ENCODE measurements at regions of chr19 and their contacts with region 1.

Region 1: GRCh38 chr19:21767065-21767800 is at the start of gene ZNF100:
- DNase-seq: peak; percentile 82 to 91 (median 84)
- H3K4me3 ChIP-seq: peak within 1 kb of the TSS; percentile 79 to 84
- H3K4me3 Mint-ChIP-seq: peak within 1 kb of the TSS; percentile 96 to 99 (median 97)
- H3K27ac ChIP-seq: peak within 1 kb of the TSS; percentile 62
- H3K27ac Mint-ChIP-seq: peak within 1 kb of the TSS; percentile 73 to 98 (median 96)
- H3K4me1 ChIP-seq: peaks cover 12% of the 10 kb centered on the region
- H3K4me1 Mint-ChIP-seq: peaks cover 13 to 36% (median 21%) of the 10 kb centered on the region in 4 donors
- H3K27me3 ChIP-seq: no peaks in the 10 kb centered on the region
- H3K27me3 Mint-ChIP-seq: no peaks in the 10 kb centered on the region
- total RNA-seq, gene ZNF100: 15.9 to 16.0 TPM

Region 2: GRCh38 chr19:21835810-21836444 is 68.7 kb after region 1 on chr19 and contains the start of gene ZNF43:
- CTCF ChIA-PET with region 1: interaction called, 11 read pairs
- POLR2A ChIA-PET with region 1: interaction called, 34 read pairs
- intact Hi-C with region 1: loop called (anchors 5 kb)
- DNase-seq: peak; percentile 92 to 95 (median 92)
- H3K4me3 ChIP-seq: peak within 1 kb of the TSS; percentile 73 to 93
- H3K4me3 Mint-ChIP-seq: peak within 1 kb of the TSS; percentile 97 to 99 (median 99)
- H3K27ac ChIP-seq: peak within 1 kb of the TSS; percentile 80
- H3K27ac Mint-ChIP-seq: peak within 1 kb of the TSS; percentile 95 to 99 (median 98)
- H3K4me1 ChIP-seq: peaks cover 16% of the 10 kb centered on the region
- H3K4me1 Mint-ChIP-seq: peaks cover 15 to 44% (median 31%) of the 10 kb centered on the region in 4 donors
- H3K27me3 ChIP-seq: no peaks in the 10 kb centered on the region
- H3K27me3 Mint-ChIP-seq: no peaks in the 10 kb centered on the region
- total RNA-seq, gene ZNF43: 27.6 to 31.9 TPM

Region 3: GRCh38 chr19:21851596-21852345 is 84.5 kb after region 1 on chr19:
- CTCF ChIA-PET with region 1: interaction called, 7 read pairs
- POLR2A ChIA-PET with region 1: interaction called, 19 read pairs
- intact Hi-C with region 1: loop called (anchors 1 kb)
- DNase-seq: peak; percentile 87 to 93 (median 87)
- H3K4me3 ChIP-seq: peak overlapping the region; percentile 7 to 91
- H3K4me3 Mint-ChIP-seq: peak overlapping the region; percentile 93 to 98 (median 94)
- H3K27ac ChIP-seq: peak overlapping the region; percentile 83
- H3K27ac Mint-ChIP-seq: peak overlapping the region; percentile 89 to 95 (median 94)
- H3K4me1 ChIP-seq: peaks cover 10% of the 10 kb centered on the region
- H3K4me1 Mint-ChIP-seq: peaks cover 13 to 29% (median 20%) of the 10 kb centered on the region in 4 donors
- H3K27me3 ChIP-seq: no peaks in the 10 kb centered on the region
- H3K27me3 Mint-ChIP-seq: peaks cover 0 to 1% of the 10 kb centered on the region in 2 donors

Region 4: DNA sequence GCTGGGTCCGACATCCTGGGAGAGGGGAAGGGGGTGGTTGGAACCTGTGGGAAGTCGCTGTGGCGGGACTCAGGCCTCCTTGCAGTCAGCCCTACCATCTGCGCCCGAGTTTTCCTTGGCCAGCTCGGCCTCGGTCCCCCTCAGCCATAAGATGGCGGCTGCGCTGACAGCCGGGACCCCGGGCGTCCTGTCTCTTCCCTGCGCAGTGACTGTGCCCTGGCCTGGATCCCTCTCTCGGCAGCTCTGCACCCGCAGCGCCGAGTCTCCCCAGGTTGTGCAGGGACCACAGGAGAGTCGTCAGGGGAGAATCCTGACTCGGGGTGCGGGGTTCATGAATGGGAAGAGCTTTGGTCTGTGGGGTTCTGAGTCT is 285.4 kb after region 1 on chr19:
- CTCF ChIA-PET with region 1: no interaction called
- POLR2A ChIA-PET with region 1: interaction called, 8 read pairs
- intact Hi-C with region 1: loop called (anchors 5 kb)
- DNase-seq: no peak
- H3K4me3 ChIP-seq: peak overlapping the region; percentile 61 to 76
- H3K4me3 Mint-ChIP-seq: peak overlapping the region; percentile 92 to 98 (median 96)
- H3K27ac ChIP-seq: peak overlapping the region; percentile 53
- H3K27ac Mint-ChIP-seq: peak overlapping the region; percentile 88 to 95 (median 94)
- H3K4me1 ChIP-seq: no peaks in the 10 kb centered on the region
- H3K4me1 Mint-ChIP-seq: peaks cover 6 to 20% (median 10%) of the 10 kb centered on the region in 4 donors
- H3K27me3 ChIP-seq: no peaks in the 10 kb centered on the region
- H3K27me3 Mint-ChIP-seq: no peaks in the 10 kb centered on the region

Region 5: GRCh38 chr19:23249911-23250649 is 1482.8 kb after region 1 on chr19 and contains the start of gene ZNF724:
- CTCF ChIA-PET with region 1: no interaction called
- POLR2A ChIA-PET with region 1: no interaction called
- intact Hi-C with region 1: loop called (anchors 2 kb)
- DNase-seq: peak; percentile 87 to 93 (median 89)
- H3K4me3 ChIP-seq: peak within 1 kb of the TSS; percentile 78 to 81
- H3K4me3 Mint-ChIP-seq: peak within 1 kb of the TSS; percentile 95 to 98 (median 97)
- H3K27ac ChIP-seq: peak within 1 kb of the TSS; percentile 63
- H3K27ac Mint-ChIP-seq: peak within 1 kb of the TSS; percentile 82 to 96 (median 93)
- H3K4me1 ChIP-seq: peaks cover 8% of the 10 kb centered on the region
- H3K4me1 Mint-ChIP-seq: peaks cover 5 to 18% (median 7%) of the 10 kb centered on the region in 4 donors
- H3K27me3 ChIP-seq: no peaks in the 10 kb centered on the region
- H3K27me3 Mint-ChIP-seq: no peaks in the 10 kb centered on the region
- total RNA-seq, gene ZNF724: 5.5 to 6.1 TPM

Region 6: GRCh38 chr19:23686621-23687423 is 1919.6 kb after region 1 on chr19 and contains the start of gene ZNF675:
- CTCF ChIA-PET with region 1: no interaction called
- POLR2A ChIA-PET with region 1: no interaction called
- intact Hi-C with region 1: loop called (anchors 5 kb)
- DNase-seq: peak; percentile 87 to 93 (median 88)
- H3K4me3 ChIP-seq: peak within 1 kb of the TSS; percentile 64 to 100
- H3K4me3 Mint-ChIP-seq: peak within 1 kb of the TSS; percentile 99 to 100 (median 99)
- H3K27ac ChIP-seq: peak within 1 kb of the TSS; percentile 83
- H3K27ac Mint-ChIP-seq: peak within 1 kb of the TSS; percentile 96 to 99 (median 98)
- H3K4me1 ChIP-seq: peaks cover 32% of the 10 kb centered on the region
- H3K4me1 Mint-ChIP-seq: peaks cover 35 to 60% (median 48%) of the 10 kb centered on the region in 4 donors
- H3K27me3 ChIP-seq: no peaks in the 10 kb centered on the region
- H3K27me3 Mint-ChIP-seq: no peaks in the 10 kb centered on the region
- total RNA-seq, gene ZNF675: 34.3 to 36.9 TPM

Measured in CD4-positive, alpha-beta memory T cell (primary cell).